ENCODE measurements at regions of chr2 and their contacts with region 1.

Region 1: DNA sequence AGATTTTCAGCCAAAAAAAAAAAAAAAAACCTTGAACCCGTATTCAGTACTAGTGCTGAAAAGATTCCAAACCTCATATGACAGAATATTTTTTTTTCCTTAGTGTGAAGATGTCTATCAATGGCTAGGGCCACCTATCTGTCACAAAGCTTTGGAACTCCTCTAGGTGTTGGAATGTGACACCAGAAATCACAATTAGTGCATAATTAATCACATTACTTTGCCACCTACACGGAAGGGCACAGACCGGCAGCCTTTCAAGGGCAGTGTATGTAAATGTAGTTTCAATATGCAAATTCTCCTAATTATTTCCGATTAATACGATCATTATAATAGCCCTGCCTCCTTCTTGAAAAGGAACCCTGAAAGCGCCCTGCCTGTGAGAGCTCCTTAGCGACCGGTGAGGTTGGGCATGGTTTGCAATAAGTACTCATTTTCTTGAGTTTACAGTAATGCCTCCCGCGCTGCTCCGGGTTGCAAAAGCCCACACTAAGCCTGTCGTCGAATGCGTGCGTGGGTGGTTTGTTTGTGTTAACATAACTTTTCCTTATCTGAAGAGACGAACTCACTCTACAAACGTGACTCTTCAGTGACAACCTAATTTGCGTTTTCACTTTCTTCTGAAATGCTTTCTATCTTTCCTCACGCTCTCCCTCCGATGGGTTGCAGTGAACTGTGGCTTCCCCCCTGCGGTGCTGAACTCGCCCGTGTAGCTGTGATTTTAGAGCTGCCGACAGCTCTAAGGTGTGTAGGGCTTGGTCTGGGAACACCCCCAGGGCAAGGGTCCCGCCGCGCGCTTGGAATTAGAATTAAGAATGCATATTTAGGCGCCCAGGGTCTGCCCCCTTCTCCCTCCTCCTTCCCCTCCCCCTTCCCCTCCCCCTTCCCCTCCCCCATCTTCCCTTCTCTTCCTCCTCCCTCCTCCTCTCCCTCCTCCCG is 765 bp upstream of the ID2 start:
- DNase-seq: peak; percentile 55
- H3K27ac ChIP-seq: peak overlapping the region; percentile 42; the same call in 1 of the 2 replicates
- CTCF ChIP-seq: no peak

Region 2: DNA sequence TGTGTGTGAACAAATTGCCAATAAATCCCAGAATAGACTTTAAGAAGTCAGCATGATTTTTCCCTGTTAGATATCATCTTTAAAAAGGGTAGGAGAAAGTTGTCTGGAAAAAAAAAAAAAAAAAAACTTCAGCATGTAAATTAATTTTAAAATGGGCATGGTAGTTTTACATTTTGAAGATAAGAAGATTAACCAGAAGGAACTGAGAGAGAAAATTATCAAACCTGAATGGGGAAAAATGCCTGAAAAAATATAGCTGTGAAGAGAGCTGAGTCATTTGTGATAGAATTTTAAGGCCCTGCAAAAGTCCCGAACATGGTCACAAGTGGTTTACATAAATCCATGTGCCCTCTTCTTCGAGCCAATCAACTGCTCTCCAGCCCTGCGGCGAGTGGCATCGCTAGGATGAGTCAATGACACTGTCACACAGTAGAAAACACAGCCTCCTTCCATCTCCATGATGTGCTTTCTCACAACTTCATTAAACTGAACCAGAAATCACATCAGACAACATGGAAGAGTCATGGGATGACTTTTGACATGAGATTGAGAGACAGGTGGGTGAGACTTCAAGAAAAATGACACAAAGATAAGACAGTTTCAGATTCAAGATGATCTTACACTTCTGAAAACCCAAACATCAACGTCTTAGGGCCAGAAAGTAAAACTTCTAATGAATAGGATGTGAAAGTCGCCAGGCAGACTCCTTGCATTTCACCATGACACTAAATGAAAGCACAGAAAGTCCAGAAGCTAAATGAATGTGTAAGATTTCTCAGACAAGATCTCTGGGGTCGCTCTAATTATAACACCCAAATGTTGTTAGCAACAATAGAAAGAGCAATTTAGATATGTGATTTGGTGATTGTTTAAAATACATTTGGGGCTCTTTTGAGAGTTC is 272.3 kb before region 1 on chr2:
- CTCF ChIA-PET with region 1: interaction called, 11 read pairs
- POLR2A ChIA-PET with region 1: no interaction called
- DNase-seq: no peak
- H3K27ac ChIP-seq: no peak overlapping the region
- CTCF ChIP-seq: no peak

Region 3: GRCh38 chr2:8606226-8606625 is 74.9 kb before region 1 on chr2:
- CTCF ChIA-PET with region 1: no interaction called
- POLR2A ChIA-PET with region 1: no interaction called
- DNase-seq: no peak
- H3K27ac ChIP-seq: no peak overlapping the region
- CTCF ChIP-seq: no peak